ENCODE measurements at regions of chr22 and their contacts with region 1.

Region 1: DNA sequence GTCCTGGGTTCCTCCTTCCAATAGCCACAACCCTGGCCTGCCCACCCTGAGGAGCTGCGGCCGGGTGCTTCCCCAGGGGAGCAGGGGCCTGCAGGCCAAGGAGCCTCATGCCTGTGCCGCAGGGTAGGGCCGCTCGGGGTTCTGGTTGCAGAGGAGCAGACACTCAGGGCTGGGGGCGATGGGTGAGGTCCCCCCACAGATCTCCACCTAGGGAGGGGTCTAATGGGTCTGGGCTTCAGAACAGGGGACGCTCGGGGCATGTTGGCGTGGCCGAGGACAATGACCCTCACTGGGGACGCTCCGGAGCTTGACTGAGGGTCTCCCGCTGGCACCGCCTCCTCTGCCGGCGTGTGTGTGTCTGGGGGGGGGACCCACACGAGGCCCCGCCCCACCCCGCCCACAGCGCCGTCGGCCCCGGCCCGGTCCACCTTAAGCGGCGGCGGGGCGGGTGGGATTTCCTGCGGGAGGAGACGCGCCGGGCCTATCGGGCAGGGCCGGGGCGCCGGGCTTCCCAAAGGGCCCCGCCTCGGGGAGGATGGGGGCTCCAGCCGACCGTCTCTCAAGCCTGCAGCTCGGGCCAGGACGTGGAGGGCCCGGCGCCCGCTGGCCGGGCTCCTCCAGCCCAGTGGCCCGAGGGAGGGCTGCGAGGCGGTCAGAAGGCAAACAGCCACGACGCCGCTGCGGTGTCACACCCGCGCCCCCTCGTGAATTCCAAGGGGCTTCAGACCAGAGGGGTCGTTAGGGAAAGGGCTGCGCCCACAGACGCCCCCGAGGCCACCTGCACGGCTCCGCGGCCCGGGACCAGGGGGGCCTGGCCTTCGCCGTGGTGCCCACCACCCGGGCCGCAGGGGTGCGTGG is 636 bp upstream of the ZDHHC8 start:
- DNase-seq: peak; percentile 75 to 93 (median 88)
- H3K4me3 ChIP-seq: peak overlapping the region; percentile 56 to 100 (median 92)
- H3K27ac ChIP-seq: peak overlapping the region; percentile 58 to 99 (median 96)
- H3K27me3 ChIP-seq: no peaks in the 10 kb centered on the region
- CTCF ChIP-seq: peak in 1 of 56 donors; percentile 12

Region 2: DNA sequence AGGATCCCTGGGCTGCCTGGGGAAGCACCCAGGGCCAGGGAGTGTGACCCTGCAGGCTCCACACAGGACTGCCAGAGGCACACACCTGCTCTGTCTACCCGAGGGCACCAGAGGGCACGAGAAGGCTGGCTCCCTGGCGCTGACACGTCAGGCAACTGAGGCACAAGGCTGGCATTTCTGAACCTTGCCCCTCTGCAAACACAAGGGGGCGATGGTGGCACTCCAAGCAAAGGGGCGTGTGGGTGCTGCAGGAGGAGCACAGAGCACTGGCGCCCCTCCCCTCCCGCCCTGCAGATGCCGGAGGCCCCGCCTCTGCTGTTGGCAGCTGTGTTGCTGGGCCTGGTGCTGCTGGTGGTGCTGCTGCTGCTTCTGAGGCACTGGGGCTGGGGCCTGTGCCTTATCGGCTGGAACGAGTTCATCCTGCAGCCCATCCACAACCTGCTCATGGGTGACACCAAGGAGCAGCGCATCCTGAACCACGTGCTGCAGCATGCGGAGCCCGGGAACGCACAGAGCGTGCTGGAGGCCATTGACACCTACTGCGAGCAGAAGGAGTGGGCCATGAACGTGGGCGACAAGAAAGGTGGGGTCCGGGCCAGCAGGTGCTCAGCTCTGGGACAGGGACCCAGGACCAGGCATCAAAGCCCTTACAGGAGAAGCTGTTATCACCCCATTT is 168.6 kb before region 1 on chr22:
- intact Hi-C with region 1: loop called in 1 of 2 experiments (anchors 5 kb)
- DNase-seq: peak in 9 of 10 donors; percentile 67 to 90 (median 83)
- H3K4me3 ChIP-seq: peak overlapping the region in 3 of 59 donors; percentile 4 to 37 (median 21)
- H3K27ac ChIP-seq: peak overlapping the region in 52 of 59 donors; percentile 1 to 88 (median 63)
- H3K27me3 ChIP-seq: no peaks in the 10 kb centered on the region
- CTCF ChIP-seq: peak; percentile 36 to 84 (median 70)

Region 3: DNA sequence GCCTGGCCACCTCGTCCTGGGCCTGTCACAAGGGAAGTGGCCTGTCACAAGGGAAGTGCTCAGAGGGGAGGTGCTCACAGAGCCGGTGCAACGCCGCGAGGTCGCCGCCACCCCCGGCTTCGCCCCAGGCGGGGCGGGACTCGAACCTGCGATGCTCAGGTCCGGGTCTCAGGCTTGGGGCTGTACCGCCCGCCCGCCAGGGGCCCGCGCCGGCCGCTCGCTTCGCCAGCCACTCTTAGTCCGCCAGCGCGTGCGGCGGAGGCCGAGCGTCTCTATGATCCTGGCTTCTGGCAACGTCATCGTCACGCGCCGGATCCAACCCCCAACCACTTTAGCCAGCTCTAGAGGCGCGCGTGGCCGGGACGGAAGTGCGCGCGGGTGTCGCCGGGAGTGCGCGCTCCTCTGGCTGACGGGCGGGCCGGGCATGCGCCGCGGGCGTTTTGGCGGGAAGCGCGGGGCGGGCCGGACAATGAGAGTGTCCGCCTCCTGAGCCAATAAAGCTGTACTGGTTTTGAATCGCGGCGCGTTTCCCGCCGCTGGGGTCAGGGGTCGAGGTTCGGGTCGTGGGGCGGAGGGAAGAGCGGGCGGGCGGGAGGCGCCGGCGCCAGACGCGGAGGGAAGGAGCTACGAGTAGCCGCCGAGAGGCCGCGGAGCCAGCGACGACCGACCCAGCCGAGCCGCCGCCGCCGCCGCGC is 13.9 kb before region 1 on chr22 and contains the start of gene TRMT2A:
- intact Hi-C with region 1: loop called (anchors 1 to 2 kb)
- DNase-seq: peak; percentile 95 to 99 (median 96)
- H3K4me3 ChIP-seq: peak within 1 kb of the TSS; percentile 50 to 98 (median 87)
- H3K27ac ChIP-seq: peak within 1 kb of the TSS; percentile 20 to 96 (median 84)
- H3K27me3 ChIP-seq: no peaks in the 10 kb centered on the region
- CTCF ChIP-seq: peak in 44 of 56 donors; percentile 8 to 63 (median 36)
- total RNA-seq, gene TRMT2A: 33.1 to 73.3 (median 50.4) TPM

Region 4: GRCh38 chr22:20249797-20250354 is 118.9 kb after region 1 on chr22:
- intact Hi-C with region 1: no loop called
- DNase-seq: peak in 9 of 10 donors; percentile 55 to 82 (median 74)
- H3K4me3 ChIP-seq: peak overlapping the region in 17 of 59 donors; percentile 0 to 37 (median 14)
- H3K27ac ChIP-seq: peak overlapping the region in 57 of 59 donors; percentile 4 to 97 (median 82)
- H3K27me3 ChIP-seq: no peaks in the 10 kb centered on the region
- CTCF ChIP-seq: no peak

Measured in dorsolateral prefrontal cortex (tissue), 120 donors.